CD4-positive, alpha-beta memory T cell (primary cell): ENCODE measurements at regions of chr10 and their contacts with region 1.

Region 1: GRCh38 chr10:69318106-69318866 is 40.0 kb downstream of the HK1 start:
- DNase-seq: peak; percentile 90 to 92 (median 91)
- H3K4me3 ChIP-seq: peak overlapping the region; percentile 66 to 99
- H3K4me3 Mint-ChIP-seq: peak overlapping the region; percentile 77 to 98 (median 95)
- H3K27ac ChIP-seq: peak overlapping the region; percentile 84
- H3K27ac Mint-ChIP-seq: peak overlapping the region; percentile 79 to 99 (median 84)
- H3K4me1 ChIP-seq: peaks cover 43% of the 10 kb centered on the region
- H3K4me1 Mint-ChIP-seq: peaks cover 23 to 52% (median 35%) of the 10 kb centered on the region in 4 donors
- H3K27me3 ChIP-seq: no peaks in the 10 kb centered on the region
- H3K27me3 Mint-ChIP-seq: no peaks in the 10 kb centered on the region

Region 2: DNA sequence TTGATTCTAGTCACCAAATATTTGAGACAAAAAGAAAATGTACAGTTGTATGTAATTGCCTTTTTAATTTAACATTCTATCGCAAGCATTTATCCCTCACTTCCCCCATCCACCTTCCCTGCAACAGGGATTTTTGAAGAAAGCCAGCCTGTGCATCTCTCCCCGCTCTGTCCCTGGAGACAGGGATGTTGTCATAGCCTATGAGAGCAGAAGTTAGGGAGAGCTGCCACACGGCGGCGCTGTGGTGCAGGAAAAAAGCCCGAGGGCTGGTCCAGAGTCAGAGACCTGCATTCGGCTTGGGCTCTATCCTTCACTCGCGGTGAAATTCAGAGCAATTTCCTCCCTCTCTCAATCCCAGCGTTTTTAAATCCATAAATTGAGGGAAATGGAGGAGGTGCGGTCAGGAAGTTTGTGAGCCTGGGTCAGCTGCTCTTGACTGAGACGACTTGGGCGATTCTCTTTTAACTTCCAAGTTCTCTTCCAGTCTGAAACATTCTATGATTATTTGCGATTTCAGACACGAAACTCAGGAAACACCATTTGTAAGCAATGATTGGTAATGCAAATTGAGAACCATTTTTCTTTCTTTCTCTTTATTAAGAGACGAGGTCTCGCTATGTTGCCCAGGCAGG is 80.6 kb before region 1 on chr10:
- CTCF ChIA-PET with region 1: interaction called, 9 read pairs
- POLR2A ChIA-PET with region 1: interaction called, 7 read pairs
- intact Hi-C with region 1: loop called (anchors 1 kb)
- DNase-seq: peak; percentile 78 to 82 (median 79)
- H3K4me3 ChIP-seq: no peak overlapping the region
- H3K4me3 Mint-ChIP-seq: peak overlapping the region in 2 of 8 donors; percentile 7 to 48
- H3K27ac ChIP-seq: no peak overlapping the region
- H3K27ac Mint-ChIP-seq: peak overlapping the region in 3 of 7 donors; percentile 11 to 63 (median 17)
- H3K4me1 ChIP-seq: peaks cover 17% of the 10 kb centered on the region
- H3K4me1 Mint-ChIP-seq: peaks cover 14 to 27% (median 17%) of the 10 kb centered on the region in 4 donors
- H3K27me3 ChIP-seq: no peaks in the 10 kb centered on the region
- H3K27me3 Mint-ChIP-seq: no peaks in the 10 kb centered on the region

Region 3: DNA sequence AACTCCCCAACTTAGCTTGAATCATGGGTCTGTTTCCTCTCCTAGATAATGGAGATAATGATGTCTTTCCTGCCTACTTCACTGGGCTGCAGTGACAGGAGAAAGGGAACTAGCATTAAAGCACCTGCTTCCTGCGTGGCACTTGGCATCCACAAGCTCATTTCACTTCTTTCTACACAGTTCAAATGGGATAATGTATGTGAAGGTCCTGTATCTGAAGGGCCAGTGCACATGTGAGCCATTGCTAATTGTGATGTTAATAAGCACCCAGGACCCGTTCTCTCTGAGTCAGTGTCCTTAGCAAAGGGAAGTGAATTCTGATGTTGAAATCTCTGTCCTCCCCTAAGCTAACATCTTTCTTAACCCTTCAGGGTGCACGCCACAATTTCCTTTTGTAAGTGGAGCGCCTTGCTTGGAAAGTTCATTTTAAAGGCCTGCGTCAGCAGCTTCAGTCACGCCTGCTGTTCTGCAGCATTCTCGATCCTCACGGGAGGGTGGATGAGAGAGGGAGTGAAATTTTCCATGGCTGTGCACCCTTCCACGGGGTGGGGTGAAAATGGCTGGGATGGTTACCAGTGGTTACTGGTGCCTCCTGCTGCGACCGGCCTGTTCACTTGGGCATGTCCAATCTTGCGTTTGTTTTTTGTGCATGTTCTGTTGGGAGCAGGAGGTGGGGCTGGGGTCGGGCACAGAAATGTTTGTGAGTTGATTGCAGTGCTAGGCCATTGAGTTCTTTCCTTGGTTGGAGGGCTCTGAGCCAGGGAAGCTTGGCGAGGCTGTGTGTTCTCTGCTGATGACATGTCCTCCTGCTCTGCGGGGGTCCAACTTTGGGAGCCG is 19.2 kb after region 1 on chr10:
- CTCF ChIA-PET with region 1: interaction called, 5 read pairs
- POLR2A ChIA-PET with region 1: interaction called, 70 read pairs
- intact Hi-C with region 1: no loop called
- DNase-seq: no peak
- H3K4me3 ChIP-seq: no peak overlapping the region
- H3K4me3 Mint-ChIP-seq: peak overlapping the region in 5 of 8 donors; percentile 11 to 57 (median 24)
- H3K27ac ChIP-seq: no peak overlapping the region
- H3K27ac Mint-ChIP-seq: peak overlapping the region in 6 of 7 donors; percentile 42 to 70 (median 58)
- H3K4me1 ChIP-seq: peaks cover 78% of the 10 kb centered on the region
- H3K4me1 Mint-ChIP-seq: peaks cover 47 to 88% (median 71%) of the 10 kb centered on the region in 4 donors
- H3K27me3 ChIP-seq: no peaks in the 10 kb centered on the region
- H3K27me3 Mint-ChIP-seq: no peaks in the 10 kb centered on the region

Region 4: DNA sequence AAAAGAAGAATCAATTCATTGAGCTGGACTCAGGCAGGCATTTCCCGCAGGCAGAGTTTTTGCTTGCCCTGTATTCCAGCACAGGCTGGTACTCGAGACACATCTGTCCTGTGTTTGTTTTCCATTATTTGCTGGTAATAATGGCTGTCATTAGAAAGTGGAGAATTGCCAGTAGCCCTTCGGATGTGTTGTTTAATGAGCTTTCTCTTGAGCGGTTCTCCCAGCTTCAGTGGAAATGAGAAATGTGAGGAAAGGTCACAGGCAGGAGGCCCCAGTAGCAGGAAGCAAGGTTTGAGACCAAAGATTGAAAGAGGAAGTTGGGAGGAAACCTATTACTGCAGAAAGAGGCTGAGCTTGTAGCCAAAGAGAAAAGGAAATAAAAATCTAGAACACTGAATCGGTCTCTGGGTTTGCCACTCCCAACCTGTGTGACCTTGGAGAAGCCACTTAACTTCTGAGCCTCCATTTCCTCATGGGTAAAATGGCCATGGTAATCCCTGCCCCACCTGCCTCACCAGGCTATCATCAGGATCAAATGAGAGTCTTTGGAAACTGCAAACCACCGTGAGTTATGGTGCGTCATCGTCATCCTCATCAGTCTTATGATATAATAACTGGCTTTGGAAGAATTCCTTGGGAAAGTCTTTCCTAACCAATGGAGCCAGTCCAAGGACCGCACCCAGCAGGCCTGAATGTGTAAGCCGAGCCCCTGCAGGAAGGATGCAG is 30.7 kb after region 1 on chr10:
- CTCF ChIA-PET with region 1: interaction called, 4 read pairs
- POLR2A ChIA-PET with region 1: interaction called, 70 read pairs
- intact Hi-C with region 1: no loop called
- DNase-seq: peak in 2 of 5 donors; percentile 14 to 16
- H3K4me3 ChIP-seq: no peak overlapping the region
- H3K4me3 Mint-ChIP-seq: peak overlapping the region; percentile 18 to 86 (median 79)
- H3K27ac ChIP-seq: peak overlapping the region; percentile 34
- H3K27ac Mint-ChIP-seq: peak overlapping the region; percentile 71 to 97 (median 93)
- H3K4me1 ChIP-seq: peaks cover 71% of the 10 kb centered on the region
- H3K4me1 Mint-ChIP-seq: peaks cover 50 to 84% (median 66%) of the 10 kb centered on the region in 4 donors
- H3K27me3 ChIP-seq: no peaks in the 10 kb centered on the region
- H3K27me3 Mint-ChIP-seq: no peaks in the 10 kb centered on the region

Region 5: GRCh38 chr10:69360485-69361324 is 42.4 kb after region 1 on chr10:
- CTCF ChIA-PET with region 1: interaction called, 3 read pairs
- POLR2A ChIA-PET with region 1: interaction called, 46 read pairs
- intact Hi-C with region 1: loop called (anchors 2 kb)
- DNase-seq: no peak
- H3K4me3 ChIP-seq: no peak overlapping the region
- H3K4me3 Mint-ChIP-seq: peak overlapping the region in 6 of 8 donors; percentile 26 to 76 (median 50)
- H3K27ac ChIP-seq: peak overlapping the region; percentile 10
- H3K27ac Mint-ChIP-seq: peak overlapping the region; percentile 75 to 95 (median 90)
- H3K4me1 ChIP-seq: peaks cover 51% of the 10 kb centered on the region
- H3K4me1 Mint-ChIP-seq: peaks cover 39 to 80% (median 57%) of the 10 kb centered on the region in 4 donors
- H3K27me3 ChIP-seq: no peaks in the 10 kb centered on the region
- H3K27me3 Mint-ChIP-seq: no peaks in the 10 kb centered on the region

Region 6: GRCh38 chr10:69392481-69393000 is 74.3 kb after region 1 on chr10:
- CTCF ChIA-PET with region 1: interaction called, 5 read pairs
- POLR2A ChIA-PET with region 1: interaction called, 5 read pairs
- intact Hi-C with region 1: loop called (anchors 2 kb)
- DNase-seq: peak; percentile 79 to 81 (median 80)
- H3K4me3 ChIP-seq: no peak overlapping the region
- H3K4me3 Mint-ChIP-seq: no peak overlapping the region
- H3K27ac ChIP-seq: peak overlapping the region; percentile 22
- H3K27ac Mint-ChIP-seq: peak overlapping the region; percentile 41 to 91 (median 79)
- H3K4me1 ChIP-seq: peaks cover 15% of the 10 kb centered on the region
- H3K4me1 Mint-ChIP-seq: peaks cover 7 to 17% (median 11%) of the 10 kb centered on the region in 4 donors
- H3K27me3 ChIP-seq: no peaks in the 10 kb centered on the region
- H3K27me3 Mint-ChIP-seq: no peaks in the 10 kb centered on the region